Left ventricle myocardium superior (tissue), 1 donor: ENCODE measurements at regions of chr6 and their contacts with region 1.

Region 1: GRCh38 chr6:32664827-32665362 is 1.6 kb downstream of the HLA-DQB1 start:
- DNase-seq: peak; percentile 51
- ATAC-seq: peak; percentile 82

Region 2: GRCh38 chr6:32763427-32763826 is 98.5 kb after region 1 on chr6 and contains the start of gene HLA-DQB2:
- intact Hi-C with region 1: loop called (anchors 2 kb)
- DNase-seq: no peak
- ATAC-seq: no peak
- total RNA-seq, gene HLA-DQB2: 3.3 TPM

Region 3: GRCh38 chr6:33720994-33721393 is 1056.1 kb after region 1 on chr6:
- intact Hi-C with region 1: no loop called
- DNase-seq: no peak
- ATAC-seq: no peak